CD8-positive, alpha-beta T cell (primary cell): ENCODE measurements at regions of chr11 and their contacts with region 1.

Region 1: DNA sequence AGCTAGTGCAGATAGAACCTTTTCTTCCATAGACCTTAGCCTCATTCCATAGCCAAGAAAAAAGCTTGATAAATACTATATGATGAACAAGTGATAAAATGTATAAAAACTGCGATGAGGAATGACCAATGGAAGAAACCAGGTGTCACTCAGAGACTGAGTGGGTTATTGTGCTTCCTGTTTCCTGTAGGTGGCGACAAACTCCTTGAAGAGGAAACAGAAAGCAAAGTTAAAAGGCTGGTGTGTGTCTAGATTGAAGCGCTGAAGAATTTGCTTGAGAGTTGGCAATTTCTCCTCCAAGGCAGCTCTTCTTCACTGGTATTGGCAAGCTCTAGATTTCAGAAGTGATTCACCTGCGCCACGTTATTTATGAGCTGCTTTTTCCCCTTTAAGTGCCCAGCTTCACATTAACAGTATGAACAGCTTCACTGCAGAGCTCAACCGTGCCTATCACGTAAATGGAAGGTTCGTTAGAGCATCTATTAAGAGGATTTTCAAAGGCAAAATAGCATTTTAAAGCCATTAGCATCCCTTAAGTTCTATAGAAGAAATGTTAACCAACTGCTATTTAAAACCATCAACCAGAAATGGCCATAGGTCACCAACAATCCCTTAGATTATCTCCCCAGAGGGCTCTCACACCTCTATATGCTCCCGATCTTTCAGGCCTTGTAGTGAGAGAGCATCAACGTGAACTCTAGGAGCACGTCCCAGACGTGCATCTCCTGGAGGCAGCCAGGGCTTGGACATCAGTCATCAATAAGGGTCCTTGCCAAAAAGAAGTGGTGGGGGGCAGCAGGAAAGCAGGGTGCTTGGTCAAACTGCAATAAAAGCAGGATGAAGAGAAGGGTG is 179.4 kb downstream of the CADM1 start:
- DNase-seq: peak in 5 of 9 experiments; percentile 1 to 71 (median 17)
- ATAC-seq: peak; percentile 40
- H3K4me3 ChIP-seq: no peak overlapping the region
- H3K4me3 Mint-ChIP-seq: no peak overlapping the region
- H3K27ac ChIP-seq: no peak overlapping the region
- H3K27ac Mint-ChIP-seq: no peak overlapping the region
- H3K4me1 ChIP-seq: no peaks in the 10 kb centered on the region
- H3K4me1 Mint-ChIP-seq: peaks cover 1% of the 10 kb centered on the region
- H3K27me3 ChIP-seq: no peaks in the 10 kb centered on the region
- H3K27me3 Mint-ChIP-seq: peaks cover 2% of the 10 kb centered on the region
- CTCF ChIP-seq: peak; percentile 64

Region 2: GRCh38 chr11:115360186-115360824 is 35.5 kb after region 1 on chr11:
- CTCF ChIA-PET with region 1: no interaction called
- POLR2A ChIA-PET with region 1: no interaction called
- intact Hi-C with region 1: no loop called
- DNase-seq: no peak
- ATAC-seq: no peak
- H3K4me3 ChIP-seq: no peak overlapping the region
- H3K4me3 Mint-ChIP-seq: no peak overlapping the region
- H3K27ac ChIP-seq: no peak overlapping the region
- H3K27ac Mint-ChIP-seq: no peak overlapping the region
- H3K4me1 ChIP-seq: no peaks in the 10 kb centered on the region
- H3K4me1 Mint-ChIP-seq: no peaks in the 10 kb centered on the region
- H3K27me3 ChIP-seq: no peaks in the 10 kb centered on the region
- H3K27me3 Mint-ChIP-seq: peaks cover 2% of the 10 kb centered on the region
- CTCF ChIP-seq: no peak

Region 3: DNA sequence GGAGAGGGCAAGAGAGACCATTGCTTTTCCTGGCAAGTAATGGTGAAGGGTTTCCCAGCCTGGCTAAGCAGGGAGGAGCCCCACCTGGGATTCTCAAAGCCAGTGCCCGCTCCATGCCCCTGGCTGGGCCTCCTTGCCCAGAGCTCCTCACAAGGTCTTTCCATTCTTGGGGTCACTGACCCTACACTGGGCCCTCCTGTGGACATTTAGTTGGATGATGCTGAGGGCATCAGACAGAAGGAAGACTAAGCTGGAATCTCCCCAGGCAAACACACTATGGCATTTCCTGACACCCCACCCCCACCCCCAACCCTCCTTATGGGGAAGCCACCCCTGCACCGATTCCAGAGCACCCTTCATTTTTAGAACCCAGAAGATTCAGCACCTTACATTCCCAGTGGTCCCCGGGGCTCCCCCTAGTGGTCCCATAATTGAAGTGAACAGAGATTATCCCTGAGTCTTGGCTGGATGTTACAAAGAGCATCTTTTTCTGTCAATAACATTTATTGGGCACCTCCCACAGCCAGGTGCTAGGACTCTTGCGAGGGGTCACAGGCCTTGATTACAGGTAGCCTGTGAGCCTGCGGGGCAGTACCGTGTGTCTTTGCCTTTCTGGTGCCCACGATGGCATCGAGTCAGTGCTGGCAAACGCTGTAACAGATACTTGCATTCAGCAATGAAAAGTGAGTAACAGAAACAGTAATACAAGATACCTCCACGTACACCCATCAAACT is 899.5 kb after region 1 on chr11:
- CTCF ChIA-PET with region 1: no interaction called
- POLR2A ChIA-PET with region 1: no interaction called
- intact Hi-C with region 1: loop called in 1 of 2 experiments (anchors 10 kb)
- DNase-seq: peak in 7 of 9 experiments; percentile 13 to 50 (median 27)
- ATAC-seq: no peak
- H3K4me3 ChIP-seq: no peak overlapping the region
- H3K4me3 Mint-ChIP-seq: no peak overlapping the region
- H3K27ac ChIP-seq: no peak overlapping the region
- H3K27ac Mint-ChIP-seq: no peak overlapping the region
- H3K4me1 ChIP-seq: no peaks in the 10 kb centered on the region
- H3K4me1 Mint-ChIP-seq: no peaks in the 10 kb centered on the region
- H3K27me3 ChIP-seq: peaks cover 0 to 4% of the 10 kb centered on the region in 2 experiments
- H3K27me3 Mint-ChIP-seq: peaks cover 12% of the 10 kb centered on the region
- CTCF ChIP-seq: peak; percentile 36

Region 4: GRCh38 chr11:116276051-116277044 is 951.5 kb after region 1 on chr11:
- CTCF ChIA-PET with region 1: no interaction called
- POLR2A ChIA-PET with region 1: no interaction called
- intact Hi-C with region 1: loop called in 1 of 2 experiments (anchors 2 kb)
- DNase-seq: peak; percentile 34 to 75 (median 62)
- ATAC-seq: no peak
- H3K4me3 ChIP-seq: no peak overlapping the region
- H3K4me3 Mint-ChIP-seq: no peak overlapping the region
- H3K27ac ChIP-seq: no peak overlapping the region
- H3K27ac Mint-ChIP-seq: no peak overlapping the region
- H3K4me1 ChIP-seq: no peaks in the 10 kb centered on the region
- H3K4me1 Mint-ChIP-seq: no peaks in the 10 kb centered on the region
- H3K27me3 ChIP-seq: no peaks in the 10 kb centered on the region
- H3K27me3 Mint-ChIP-seq: peaks cover 11% of the 10 kb centered on the region
- CTCF ChIP-seq: peak; percentile 72